Cardiac septum (tissue), 1 donor: ENCODE measurements at regions of chr16 and their contacts with region 1.

Region 1: DNA sequence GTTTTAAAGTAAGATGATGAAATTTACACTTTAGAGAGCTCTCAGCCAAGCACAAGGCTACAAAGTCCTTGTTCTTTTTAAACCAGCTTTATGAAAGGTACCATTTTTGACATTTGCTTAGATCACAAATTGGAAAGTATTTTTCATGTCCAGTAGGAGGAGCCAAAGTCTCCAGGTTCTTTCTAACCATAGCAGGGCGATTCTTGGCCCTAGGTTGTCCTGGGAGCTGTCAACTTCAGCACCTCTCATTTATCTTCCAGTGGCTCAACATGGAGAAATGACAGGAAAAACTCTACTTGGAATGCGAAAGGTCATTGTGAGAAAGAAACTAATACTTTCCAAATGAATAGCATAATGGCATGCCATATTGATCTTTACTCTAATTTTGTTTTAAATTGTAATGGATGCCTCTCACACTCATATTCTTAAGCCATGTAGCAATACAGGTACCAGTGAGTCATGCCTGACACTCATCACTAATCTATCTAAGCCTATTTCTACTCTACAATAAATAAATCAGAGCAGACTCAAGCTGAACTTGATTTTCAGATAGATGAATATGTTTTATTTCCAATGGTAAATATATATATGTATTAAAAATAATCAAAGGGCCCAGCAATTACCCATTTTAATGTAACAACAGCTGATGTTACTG is 919.1 kb upstream of the EEF2KMT start:
- DNase-seq: no peak

Region 2: DNA sequence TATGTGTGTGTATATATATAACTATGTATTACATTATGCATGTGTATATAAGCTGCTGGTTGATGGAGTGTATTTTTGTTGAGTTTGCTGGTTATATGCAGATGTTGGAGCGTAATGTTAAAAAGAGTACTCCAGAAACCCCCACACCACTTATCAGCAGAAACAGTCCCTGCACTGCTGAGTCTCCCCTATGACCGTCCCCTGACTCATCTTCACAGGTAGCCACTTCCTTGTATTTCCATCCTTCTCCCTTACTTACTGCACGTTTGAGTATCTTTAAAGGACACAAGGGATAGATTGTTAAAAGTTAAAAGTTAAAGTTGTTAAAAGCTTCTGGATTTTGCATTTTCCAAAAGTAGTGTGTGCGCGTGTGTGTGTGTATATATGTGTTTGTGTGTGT is 65.2 kb before region 1 on chr16:
- intact Hi-C with region 1: loop called (anchors 10 kb)
- DNase-seq: no peak

Region 3: DNA sequence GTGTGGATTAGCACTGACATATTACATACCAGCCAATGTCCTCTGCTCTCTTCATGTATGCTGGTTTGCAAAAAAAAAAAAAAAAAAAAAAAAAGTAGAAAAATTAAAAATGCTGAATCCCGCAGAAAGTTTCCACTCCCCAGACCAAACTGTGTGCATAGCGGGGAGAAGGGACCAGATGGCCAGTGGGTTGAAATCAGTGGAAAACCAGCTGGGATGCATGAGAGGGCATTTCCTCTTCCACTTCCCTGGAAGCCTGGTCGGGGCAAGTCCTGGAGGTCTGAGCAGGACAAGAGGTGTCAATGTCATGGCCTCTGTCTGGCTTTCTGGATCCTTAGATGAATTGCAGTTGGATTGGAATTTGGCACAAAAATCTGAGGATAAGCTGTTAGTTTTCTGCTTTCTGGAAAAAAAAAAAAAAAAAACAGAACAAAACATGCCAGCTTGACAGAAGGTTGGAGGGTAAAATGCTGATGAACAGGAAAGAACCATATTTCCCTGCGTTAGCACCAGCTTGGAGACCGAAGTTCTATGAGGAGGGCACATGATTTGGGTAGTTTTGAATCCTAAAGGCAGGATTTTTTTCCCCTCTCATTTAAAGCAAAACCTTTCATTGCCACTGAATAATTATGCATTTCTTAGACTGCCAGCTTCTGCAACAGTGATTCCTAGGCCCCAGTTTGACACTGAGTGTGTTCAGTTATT is 22.4 kb after region 1 on chr16:
- intact Hi-C with region 1: no loop called
- DNase-seq: no peak